AG04450 (cell line): ENCODE measurements at regions of chr10 and their contacts with region 1.

Region 1: DNA sequence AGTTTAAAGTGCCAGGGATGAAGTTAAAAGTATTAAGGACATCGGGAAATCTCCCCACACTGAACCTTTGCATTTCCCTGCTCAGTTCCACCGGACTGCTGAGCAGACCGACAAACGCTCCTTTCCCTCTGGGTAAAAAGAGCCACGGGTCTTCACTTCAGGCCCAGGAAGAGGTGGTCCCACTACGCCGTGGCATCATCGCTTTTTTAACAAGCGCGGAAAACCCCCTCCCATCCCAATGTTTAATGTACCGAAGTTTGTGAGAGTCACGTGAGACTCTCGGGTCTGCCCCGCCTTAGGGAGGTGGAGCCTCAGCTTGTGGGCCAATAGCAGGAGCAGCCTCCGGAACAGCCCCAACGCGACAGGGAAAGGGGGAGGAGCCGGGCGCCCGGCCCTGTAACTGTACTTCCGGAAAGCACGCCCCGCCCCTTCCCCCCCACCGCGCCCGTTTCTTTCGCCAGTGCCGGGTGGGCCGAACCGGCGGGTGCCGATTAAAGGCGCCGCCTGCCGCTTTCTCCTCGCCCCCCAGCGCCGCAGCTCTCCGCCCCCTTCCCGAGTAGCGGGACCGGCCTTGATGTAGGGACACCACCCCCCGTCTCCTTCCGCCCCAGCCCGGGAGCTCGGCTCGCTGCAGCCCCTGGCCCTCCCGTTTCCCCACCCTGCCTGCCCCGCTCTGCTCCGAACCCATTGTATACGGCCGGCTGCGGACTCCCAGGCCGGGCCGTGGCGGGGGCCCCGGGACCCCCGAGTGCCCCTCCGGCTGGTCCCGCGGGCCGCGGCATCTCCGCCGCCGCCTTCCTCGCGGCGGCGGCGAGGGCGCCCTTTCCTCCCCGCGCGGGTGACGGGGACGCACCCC is 2.2 kb upstream of the TRIM8 start:
- DNase-seq: peak; percentile 94
- H3K4me3 ChIP-seq: peak overlapping the region; percentile 74
- H3K27ac ChIP-seq: peak overlapping the region; percentile 77
- H3K27me3 ChIP-seq: no peaks in the 10 kb centered on the region
- CTCF ChIP-seq: no peak

Region 2: GRCh38 chr10:102420810-102421644 is 221.1 kb before region 1 on chr10 and contains the start of gene FBXL15:
- CTCF ChIA-PET with region 1: no interaction called
- POLR2A ChIA-PET with region 1: no interaction called
- DNase-seq: peak; percentile 92
- H3K4me3 ChIP-seq: peak within 1 kb of the TSS; percentile 92
- H3K27ac ChIP-seq: peak within 1 kb of the TSS; percentile 84
- H3K27me3 ChIP-seq: peaks cover 21% of the 10 kb centered on the region
- CTCF ChIP-seq: no peak
- polyA plus RNA-seq, gene FBXL15: 2.7 and 4.3 TPM in 2 replicates

Region 3: GRCh38 chr10:102503281-102504220 is 138.6 kb before region 1 on chr10 and contains the start of gene SUFU:
- CTCF ChIA-PET with region 1: interaction called, 3 read pairs
- POLR2A ChIA-PET with region 1: interaction called, 17 read pairs
- DNase-seq: peak; percentile 98
- H3K4me3 ChIP-seq: peak within 1 kb of the TSS; percentile 98
- H3K27ac ChIP-seq: peak within 1 kb of the TSS; percentile 39
- H3K27me3 ChIP-seq: no peaks in the 10 kb centered on the region
- CTCF ChIP-seq: peak; percentile 95
- polyA plus RNA-seq, gene SUFU: 11.0 and 13.2 TPM in 2 replicates

Region 4: GRCh38 chr10:102523250-102524029 is 118.7 kb before region 1 on chr10:
- CTCF ChIA-PET with region 1: no interaction called
- POLR2A ChIA-PET with region 1: no interaction called
- DNase-seq: peak; percentile 21
- H3K4me3 ChIP-seq: no peak overlapping the region
- H3K27ac ChIP-seq: peak overlapping the region; percentile 57
- H3K27me3 ChIP-seq: no peaks in the 10 kb centered on the region
- CTCF ChIP-seq: no peak

Region 5: DNA sequence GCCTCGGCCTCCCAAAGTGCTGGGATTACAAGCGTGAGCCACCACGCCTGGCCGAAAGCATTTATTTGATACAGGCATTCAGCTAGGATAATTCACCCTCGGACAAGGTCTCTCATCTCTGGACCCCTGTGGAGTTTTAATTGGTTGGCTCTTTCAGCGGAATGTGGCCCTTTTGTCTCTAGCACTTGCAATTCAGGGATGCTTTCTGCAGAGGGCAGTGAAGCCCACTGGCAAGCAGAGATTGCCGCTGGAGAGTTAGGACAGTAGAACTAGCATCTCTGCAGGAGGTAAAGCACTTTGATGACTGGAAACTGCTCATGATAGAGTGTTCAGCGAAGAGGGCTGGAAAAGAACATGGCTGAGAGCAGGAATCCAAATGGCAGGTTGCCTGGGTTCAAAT is 76.3 kb before region 1 on chr10:
- CTCF ChIA-PET with region 1: no interaction called
- POLR2A ChIA-PET with region 1: no interaction called
- DNase-seq: no peak
- H3K4me3 ChIP-seq: no peak overlapping the region
- H3K27ac ChIP-seq: no peak overlapping the region
- H3K27me3 ChIP-seq: no peaks in the 10 kb centered on the region
- CTCF ChIP-seq: no peak

Region 6: GRCh38 chr10:102604379-102604960 is 37.6 kb before region 1 on chr10:
- CTCF ChIA-PET with region 1: no interaction called
- POLR2A ChIA-PET with region 1: interaction called, 10 read pairs
- DNase-seq: peak; percentile 52
- H3K4me3 ChIP-seq: peak overlapping the region; percentile 4; the same call in 1 of the 2 replicates
- H3K27ac ChIP-seq: peak overlapping the region; percentile 89
- H3K27me3 ChIP-seq: no peaks in the 10 kb centered on the region
- CTCF ChIP-seq: no peak; the same call in 1 of the 2 replicates

Region 7: GRCh38 chr10:102629661-102630614 is 12.2 kb before region 1 on chr10:
- CTCF ChIA-PET with region 1: no interaction called
- POLR2A ChIA-PET with region 1: interaction called, 14 read pairs
- DNase-seq: peak; percentile 74
- H3K4me3 ChIP-seq: no peak overlapping the region
- H3K27ac ChIP-seq: peak overlapping the region; percentile 99
- H3K27me3 ChIP-seq: no peaks in the 10 kb centered on the region
- CTCF ChIP-seq: no peak

Region 8: DNA sequence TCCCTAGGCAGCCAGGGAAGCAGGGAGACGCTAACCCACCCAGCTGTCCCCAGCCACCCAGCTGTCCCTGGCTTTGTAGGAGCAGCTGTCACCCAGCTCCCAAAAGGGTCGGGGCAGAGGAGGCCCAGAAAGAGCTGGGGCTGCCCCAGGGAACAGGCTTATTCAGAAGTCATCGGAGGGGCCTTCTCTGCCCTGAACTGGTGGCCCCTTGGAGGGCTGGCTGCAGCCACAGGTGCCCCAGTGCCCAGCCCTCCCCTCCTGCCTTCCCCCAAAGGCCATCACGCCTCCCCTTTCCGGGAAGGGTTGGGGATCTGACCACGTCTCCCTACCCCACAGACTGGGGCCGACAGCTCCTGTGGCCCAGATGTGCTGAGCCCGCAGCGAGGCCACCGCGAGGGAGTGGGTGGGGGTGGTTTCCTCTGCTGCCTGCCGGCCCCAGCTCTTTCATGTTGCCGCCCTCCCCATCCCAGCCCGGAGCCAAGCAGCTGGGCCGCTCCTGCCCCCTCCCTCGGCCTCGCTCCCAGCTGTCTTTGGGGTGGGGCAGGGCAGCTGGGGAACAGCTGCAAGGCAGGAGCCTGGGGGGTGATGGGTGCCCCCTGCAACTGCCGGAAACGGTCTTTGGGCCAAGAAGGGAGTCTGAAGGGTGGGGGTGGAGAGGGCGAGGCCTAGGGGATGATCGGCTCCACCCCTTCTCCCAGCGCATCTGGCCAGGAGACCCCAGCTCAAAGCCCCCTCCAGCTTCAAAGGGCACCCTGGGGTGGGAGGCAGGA is 19.0 kb after region 1 on chr10:
- CTCF ChIA-PET with region 1: interaction called, 3 read pairs
- POLR2A ChIA-PET with region 1: interaction called, 11 read pairs
- DNase-seq: peak; percentile 71
- H3K4me3 ChIP-seq: no peak overlapping the region
- H3K27ac ChIP-seq: peak overlapping the region; percentile 31
- H3K27me3 ChIP-seq: no peaks in the 10 kb centered on the region
- CTCF ChIP-seq: no peak

Region 9: GRCh38 chr10:102678842-102679289 is 36.8 kb after region 1 on chr10:
- CTCF ChIA-PET with region 1: interaction called, 6 read pairs
- POLR2A ChIA-PET with region 1: interaction called, 44 read pairs
- DNase-seq: no peak
- H3K4me3 ChIP-seq: no peak overlapping the region
- H3K27ac ChIP-seq: no peak overlapping the region
- H3K27me3 ChIP-seq: no peaks in the 10 kb centered on the region
- CTCF ChIP-seq: peak; percentile 85

Region 10: DNA sequence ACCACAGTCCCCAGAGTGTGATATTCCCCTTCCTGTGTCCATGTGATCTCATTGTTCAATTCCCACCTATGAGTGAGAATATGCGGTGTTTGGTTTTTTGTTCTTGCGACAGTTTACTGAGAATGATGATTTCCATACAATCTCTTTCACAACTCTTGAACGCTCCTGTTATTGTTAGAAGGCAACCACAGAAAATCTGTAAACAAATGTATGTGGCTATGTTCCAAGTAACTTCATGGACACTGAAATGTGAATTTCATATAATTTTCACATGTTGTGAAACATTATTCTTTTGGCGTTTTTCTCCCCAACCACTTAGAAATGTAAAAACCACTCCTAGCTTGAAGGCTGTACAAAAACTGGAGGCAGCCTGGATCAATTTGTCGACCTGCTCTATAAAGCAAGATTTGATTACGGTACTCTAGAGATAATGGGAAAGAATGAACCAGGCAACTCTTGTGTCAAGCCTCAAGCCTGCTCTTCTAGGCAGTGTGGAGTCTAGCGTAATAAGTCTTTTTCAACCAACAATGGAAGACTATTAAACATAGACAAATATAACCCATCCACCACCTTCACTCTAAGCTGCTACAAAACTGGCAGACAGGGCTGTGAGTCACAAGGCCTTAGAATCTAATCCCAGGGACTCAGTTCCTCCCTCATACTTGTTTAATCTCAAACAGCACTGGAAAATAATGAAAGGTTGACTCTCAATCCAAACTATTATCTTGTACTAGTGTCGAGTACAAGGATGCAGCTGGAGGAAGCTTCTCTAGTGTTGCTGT is 49.4 kb after region 1 on chr10:
- CTCF ChIA-PET with region 1: no interaction called
- POLR2A ChIA-PET with region 1: no interaction called
- DNase-seq: no peak
- H3K4me3 ChIP-seq: no peak overlapping the region
- H3K27ac ChIP-seq: no peak overlapping the region
- H3K27me3 ChIP-seq: no peaks in the 10 kb centered on the region
- CTCF ChIP-seq: no peak

Region 11: DNA sequence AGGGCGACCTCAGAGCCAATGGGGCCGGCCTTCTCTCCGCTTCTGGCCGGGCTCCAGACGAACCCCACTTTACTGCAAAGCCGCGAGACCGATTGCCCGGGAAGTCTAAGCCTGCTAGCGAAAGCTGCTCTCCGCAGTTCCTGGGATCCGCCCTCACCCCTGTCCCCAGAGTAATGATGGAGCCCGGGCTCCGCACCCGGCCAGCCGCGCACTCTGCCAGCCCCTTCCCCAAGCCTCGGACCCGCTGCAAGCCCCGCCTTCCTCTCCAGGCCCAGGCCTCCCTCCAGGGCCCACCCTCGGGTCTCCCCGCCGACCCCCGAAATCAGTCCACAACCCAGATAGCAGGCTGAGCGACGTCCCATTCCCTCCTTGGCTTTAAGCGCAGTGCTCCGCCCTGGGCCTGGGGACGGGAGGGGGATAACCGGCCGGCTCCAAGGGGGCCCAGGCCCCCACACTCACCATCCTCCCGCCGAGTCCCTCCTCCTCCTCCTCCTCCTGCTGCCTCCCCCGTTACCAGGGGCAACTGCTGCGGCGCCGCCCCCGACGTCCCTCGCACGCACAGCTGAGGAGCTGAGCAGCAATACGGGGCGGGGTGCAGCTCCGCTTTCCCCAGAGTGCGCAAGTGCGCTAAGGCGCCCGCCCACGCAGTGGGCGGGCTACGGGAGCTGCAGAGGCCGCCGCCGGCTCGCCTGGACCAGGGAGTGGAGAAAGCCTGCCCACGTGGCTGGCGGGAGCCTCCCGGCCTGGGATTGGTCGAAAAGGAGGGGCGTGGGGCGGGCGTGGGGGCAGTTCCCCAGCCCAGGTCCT is 71.9 kb after region 1 on chr10 and contains the start of gene ARL3:
- CTCF ChIA-PET with region 1: no interaction called
- POLR2A ChIA-PET with region 1: interaction called, 10 read pairs
- DNase-seq: peak; percentile 96
- H3K4me3 ChIP-seq: peak within 1 kb of the TSS; percentile 93
- H3K27ac ChIP-seq: peak within 1 kb of the TSS; percentile 70
- H3K27me3 ChIP-seq: no peaks in the 10 kb centered on the region
- CTCF ChIP-seq: peak; percentile 54; the same call in 1 of the 2 replicates
- polyA plus RNA-seq, gene ARL3: 16.5 and 19.2 TPM in 2 replicates